IMR-90 (cell line): ENCODE measurements at regions of chr11 and their contacts with region 1.

Region 1: DNA sequence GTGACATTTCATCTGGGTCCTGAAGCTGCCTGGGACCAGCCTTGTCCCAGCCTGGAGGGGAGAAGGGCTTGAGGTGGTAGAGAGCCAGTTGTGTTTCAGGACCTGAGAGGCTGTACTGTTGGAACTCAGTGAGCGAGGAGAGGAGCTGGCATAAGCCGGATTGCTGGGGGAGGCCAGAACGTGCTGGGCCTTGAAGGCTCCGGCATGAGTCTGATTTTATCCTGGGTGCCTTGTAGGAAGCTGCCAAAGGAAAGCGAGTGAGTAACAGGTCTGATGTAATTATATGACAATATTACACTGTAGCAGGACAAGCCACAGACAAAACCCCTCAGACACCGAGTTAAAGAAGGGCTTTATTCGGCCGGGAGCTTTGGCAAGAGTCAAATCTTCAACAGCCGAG is 17.2 kb downstream of the AP2A2 start:
- DNase-seq: peak; percentile 71
- ATAC-seq: peak; percentile 72
- H3K4me3 ChIP-seq: no peak overlapping the region
- H3K27ac ChIP-seq: peak overlapping the region; percentile 92
- H3K4me1 ChIP-seq: peaks cover 15% of the 10 kb centered on the region
- H3K27me3 ChIP-seq: no peaks in the 10 kb centered on the region
- CTCF ChIP-seq: no peak
- POLR2A ChIP-seq: no peak
- RAD21 ChIP-seq: no peak

Region 2: GRCh38 chr11:723120-723883 is 219.5 kb before region 1 on chr11:
- CTCF ChIA-PET with region 1: no interaction called
- POLR2A ChIA-PET with region 1: no interaction called
- dilution Hi-C with region 1: no loop called
- in situ Hi-C with region 1: no loop called
- intact Hi-C with region 1: no loop called
- DNase-seq: peak; percentile 68
- ATAC-seq: peak; percentile 28
- H3K4me3 ChIP-seq: no peak overlapping the region
- H3K27ac ChIP-seq: no peak overlapping the region
- H3K4me1 ChIP-seq: peaks cover 4% of the 10 kb centered on the region
- H3K27me3 ChIP-seq: peaks cover 9% of the 10 kb centered on the region; the same call in 1 of the 2 replicates
- CTCF ChIP-seq: peak; percentile 80
- POLR2A ChIP-seq: no peak
- RAD21 ChIP-seq: peak; percentile 77

Region 3: GRCh38 chr11:832321-833113 is 110.3 kb before region 1 on chr11 and contains the start of gene CD151:
- CTCF ChIA-PET with region 1: no interaction called
- POLR2A ChIA-PET with region 1: no interaction called
- dilution Hi-C with region 1: no loop called
- in situ Hi-C with region 1: no loop called
- intact Hi-C with region 1: no loop called
- DNase-seq: peak; percentile 45
- ATAC-seq: peak; percentile 65
- H3K4me3 ChIP-seq: peak within 1 kb of the TSS; percentile 84
- H3K27ac ChIP-seq: peak within 1 kb of the TSS; percentile 93
- H3K4me1 ChIP-seq: peaks cover 38% of the 10 kb centered on the region
- H3K27me3 ChIP-seq: peaks cover 2% of the 10 kb centered on the region; the same call in 1 of the 2 replicates
- CTCF ChIP-seq: no peak
- POLR2A ChIP-seq: no peak; the same call in 1 of the 2 replicates
- RAD21 ChIP-seq: no peak
- total RNA-seq, gene CD151: 789 and 1,150 TPM in 2 replicates

Region 4: GRCh38 chr11:910044-910588 is 32.7 kb before region 1 on chr11:
- CTCF ChIA-PET with region 1: no interaction called
- POLR2A ChIA-PET with region 1: interaction called, 17 read pairs
- dilution Hi-C with region 1: no loop called
- in situ Hi-C with region 1: no loop called
- intact Hi-C with region 1: no loop called
- DNase-seq: no peak
- ATAC-seq: peak; percentile 31
- H3K4me3 ChIP-seq: peak overlapping the region; percentile 64
- H3K27ac ChIP-seq: peak overlapping the region; percentile 56
- H3K4me1 ChIP-seq: peaks cover 7% of the 10 kb centered on the region; the same call in 1 of the 2 replicates
- H3K27me3 ChIP-seq: no peaks in the 10 kb centered on the region
- CTCF ChIP-seq: no peak
- POLR2A ChIP-seq: no peak
- RAD21 ChIP-seq: no peak